HepG2 (cell line): ENCODE measurements at regions of chr12 and their contacts with region 1.

Region 1: GRCh38 chr12:95582230-95583058 is 31.2 kb upstream of the USP44 start:
- DNase-seq: peak; percentile 37
- ATAC-seq: peak; percentile 67
- H3K4me3 ChIP-seq: no peak overlapping the region
- H3K27ac ChIP-seq: no peak overlapping the region
- H3K4me1 ChIP-seq: no peaks in the 10 kb centered on the region
- H3K27me3 ChIP-seq: no peaks in the 10 kb centered on the region
- CTCF ChIP-seq: peak; percentile 67
- EP300 ChIP-seq: no peak
- POLR2A ChIP-seq: no peak
- RAD21 ChIP-seq: peak; percentile 45; the same call in 1 of the 2 replicates

Region 2: GRCh38 chr12:95674088-95674600 is 91.7 kb after region 1 on chr12:
- CTCF ChIA-PET with region 1: no interaction called
- POLR2A ChIA-PET with region 1: no interaction called
- in situ Hi-C with region 1: no loop called
- intact Hi-C with region 1: no loop called
- DNase-seq: no peak
- ATAC-seq: no peak
- H3K4me3 ChIP-seq: no peak overlapping the region
- H3K27ac ChIP-seq: no peak overlapping the region
- H3K4me1 ChIP-seq: no peaks in the 10 kb centered on the region; the same call in 1 of the 2 replicates
- H3K27me3 ChIP-seq: no peaks in the 10 kb centered on the region
- CTCF ChIP-seq: no peak
- EP300 ChIP-seq: no peak
- POLR2A ChIP-seq: no peak
- RAD21 ChIP-seq: no peak

Region 3: DNA sequence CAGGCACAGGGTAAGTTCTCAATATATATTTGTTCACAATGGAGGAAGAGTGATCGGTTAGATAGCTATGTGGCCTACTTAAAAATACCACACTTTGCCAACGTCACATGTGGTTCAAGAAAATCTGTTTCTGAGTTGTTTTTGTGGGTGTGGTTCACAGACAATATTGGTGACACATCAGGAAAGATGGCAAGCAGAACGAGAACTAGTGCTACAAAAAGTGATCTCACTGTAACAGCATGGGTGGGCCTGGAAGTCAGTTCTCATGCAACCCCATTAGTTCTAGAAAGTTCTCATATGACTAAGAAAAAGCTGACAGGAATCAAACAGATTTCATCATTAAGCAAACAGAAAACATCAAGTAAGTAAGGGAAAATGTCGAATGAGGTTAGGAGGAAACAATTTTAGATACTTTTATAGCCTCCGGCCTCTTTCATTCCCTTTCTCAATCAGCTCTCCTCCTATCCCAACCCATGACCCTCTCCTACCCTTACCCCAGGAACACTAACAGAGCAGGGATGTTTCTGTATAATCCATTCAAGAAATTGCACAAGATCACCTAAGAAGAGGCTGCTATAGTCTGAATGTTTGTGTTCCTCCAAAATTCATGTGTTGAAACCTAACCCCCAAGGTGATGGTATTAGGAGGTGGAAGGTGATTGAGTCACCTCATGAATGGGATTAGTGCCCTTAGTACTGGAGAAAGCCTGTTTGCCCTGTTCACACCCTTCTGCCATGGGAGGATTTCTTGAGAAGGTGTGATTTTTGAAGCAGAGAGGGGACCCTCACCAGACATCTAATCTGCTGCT is 223.6 kb after region 1 on chr12:
- CTCF ChIA-PET with region 1: no interaction called
- POLR2A ChIA-PET with region 1: no interaction called
- in situ Hi-C with region 1: loop called (anchors 5 kb)
- intact Hi-C with region 1: no loop called
- DNase-seq: no peak
- ATAC-seq: no peak
- H3K4me3 ChIP-seq: no peak overlapping the region
- H3K27ac ChIP-seq: no peak overlapping the region
- H3K4me1 ChIP-seq: peaks cover 47% of the 10 kb centered on the region
- H3K27me3 ChIP-seq: no peaks in the 10 kb centered on the region
- CTCF ChIP-seq: no peak
- EP300 ChIP-seq: no peak
- POLR2A ChIP-seq: no peak
- RAD21 ChIP-seq: no peak

Region 4: DNA sequence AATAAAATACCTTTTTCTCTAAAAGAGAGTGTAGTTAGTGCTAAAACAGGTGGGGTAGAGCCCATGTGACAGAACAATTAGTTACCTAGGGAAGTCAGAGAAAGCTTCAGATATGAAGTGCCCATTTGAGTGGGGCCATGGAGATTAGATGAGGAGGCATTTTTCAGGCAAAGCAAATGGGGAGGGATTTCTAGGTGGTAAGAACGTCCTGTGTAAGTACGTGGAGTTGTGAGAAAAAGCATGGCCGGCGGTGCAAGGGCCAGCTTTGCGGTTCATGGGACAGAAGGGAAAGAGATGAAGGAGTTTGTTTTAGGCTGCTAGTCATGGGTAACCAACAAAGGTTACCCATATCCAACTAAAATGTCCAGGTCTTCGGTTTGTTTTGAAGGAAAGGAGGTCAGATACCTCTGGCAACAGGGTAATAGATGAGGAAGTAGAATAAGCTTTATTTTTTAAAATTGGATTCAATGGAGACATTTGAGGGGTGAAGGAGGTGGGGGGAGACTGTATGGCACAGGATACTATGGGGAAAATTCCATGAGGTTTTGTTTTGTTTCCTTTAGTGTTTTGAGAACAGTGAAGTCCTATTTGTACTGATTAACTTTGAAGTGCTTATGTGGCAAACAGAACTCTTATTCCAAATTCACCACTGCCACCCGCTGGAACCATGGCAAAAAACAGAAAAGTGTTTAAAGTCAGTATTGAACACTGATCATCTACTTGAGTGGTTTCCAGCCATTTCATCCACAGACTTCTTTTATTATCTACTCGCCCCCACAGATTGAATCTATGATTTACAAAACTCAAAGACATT is 266.3 kb after region 1 on chr12:
- CTCF ChIA-PET with region 1: interaction called, 4 read pairs
- POLR2A ChIA-PET with region 1: no interaction called
- in situ Hi-C with region 1: no loop called
- intact Hi-C with region 1: loop called (anchors 1 kb)
- DNase-seq: peak; percentile 51
- ATAC-seq: peak; percentile 89
- H3K4me3 ChIP-seq: peak overlapping the region; percentile 31 to 48 (median 33); a peak in 5 of 6 replicates
- H3K27ac ChIP-seq: no peak overlapping the region
- H3K4me1 ChIP-seq: peaks cover 7% of the 10 kb centered on the region
- H3K27me3 ChIP-seq: peaks cover 0 to 4% of the 10 kb centered on the region in 2 experiments; a peak in 1 of 5 replicates
- CTCF ChIP-seq: peak; percentile 68
- EP300 ChIP-seq: no peak
- POLR2A ChIP-seq: no peak
- RAD21 ChIP-seq: peak; percentile 57; the same call in 1 of the 2 replicates

Region 5: DNA sequence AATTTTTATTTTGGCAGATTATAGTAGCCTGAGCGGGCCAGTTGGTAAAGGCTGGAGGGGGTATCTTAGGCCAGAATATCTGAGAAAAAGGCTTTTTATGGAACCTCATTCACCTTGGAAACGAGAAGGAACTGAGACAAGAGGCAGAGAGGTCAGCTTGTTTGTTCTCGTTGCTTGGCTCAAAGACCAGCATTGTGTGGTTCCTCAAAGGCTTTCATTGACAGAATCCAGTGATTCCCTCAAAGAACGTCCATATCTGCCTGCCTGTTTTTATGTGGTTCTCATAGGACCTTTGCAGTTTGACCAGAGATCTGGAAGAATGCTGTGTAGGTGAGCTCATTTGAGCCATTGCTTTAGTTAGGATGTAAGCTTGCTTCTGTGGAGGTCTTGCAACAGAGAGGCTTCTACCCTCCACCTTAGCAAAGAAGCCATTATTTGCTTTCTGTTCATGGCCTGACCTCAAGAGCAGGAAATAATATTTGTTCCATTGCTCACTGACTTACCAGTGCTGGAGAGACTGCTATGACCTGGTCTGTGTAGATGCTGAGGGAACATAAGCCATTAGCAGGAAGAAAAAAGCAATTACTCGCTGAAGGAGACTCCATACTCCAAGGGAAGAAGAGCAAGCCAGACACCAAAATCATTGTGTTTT is 1024.3 kb after region 1 on chr12:
- CTCF ChIA-PET with region 1: no interaction called
- POLR2A ChIA-PET with region 1: no interaction called
- in situ Hi-C with region 1: no loop called
- intact Hi-C with region 1: no loop called
- DNase-seq: no peak
- ATAC-seq: no peak
- H3K4me3 ChIP-seq: no peak overlapping the region
- H3K27ac ChIP-seq: no peak overlapping the region
- H3K4me1 ChIP-seq: no peaks in the 10 kb centered on the region
- H3K27me3 ChIP-seq: peaks cover 0 to 9% of the 10 kb centered on the region in 2 experiments; a peak in 3 of 5 replicates
- CTCF ChIP-seq: no peak
- EP300 ChIP-seq: no peak
- POLR2A ChIP-seq: no peak
- RAD21 ChIP-seq: no peak